Stomach (tissue), 19 donors: ENCODE measurements at regions of chr1 and their contacts with region 1.

Region 1: GRCh38 chr1:53182111-53182593 is 14.5 kb upstream of the CPT2 start:
- DNase-seq: peak; percentile 90 to 94
- H3K4me3 ChIP-seq: no peak overlapping the region
- H3K27ac ChIP-seq: peak overlapping the region in 4 of 5 donors; percentile 70 to 82 (median 75)
- H3K4me1 ChIP-seq: peaks cover 15 to 48% (median 31%) of the 10 kb centered on the region in 4 donors
- H3K27me3 ChIP-seq: no peaks in the 10 kb centered on the region
- CTCF ChIP-seq: peak in 5 of 7 experiments; percentile 74 to 90 (median 83)
- EP300 ChIP-seq: no peak
- POLR2A ChIP-seq: no peak

Region 2: GRCh38 chr1:52913537-52913936 is 268.6 kb before region 1 on chr1:
- intact Hi-C with region 1: loop called (anchors 10 kb)
- DNase-seq: no peak
- H3K4me3 ChIP-seq: no peak overlapping the region
- H3K27ac ChIP-seq: no peak overlapping the region
- H3K4me1 ChIP-seq: peaks cover 0 to 31% (median 9%) of the 10 kb centered on the region in 4 donors
- H3K27me3 ChIP-seq: no peaks in the 10 kb centered on the region
- CTCF ChIP-seq: no peak
- EP300 ChIP-seq: no peak
- POLR2A ChIP-seq: no peak